A673 (cell line): ENCODE measurements at regions of chr15 and their contacts with region 1.

Region 1: GRCh38 chr15:63487076-63487757 is 17.2 kb upstream of the USP3 start:
- DNase-seq: peak; percentile 91
- H3K4me3 ChIP-seq: no peak overlapping the region
- H3K27ac ChIP-seq: no peak overlapping the region
- H3K4me1 ChIP-seq: peaks cover 18% of the 10 kb centered on the region
- H3K27me3 ChIP-seq: no peaks in the 10 kb centered on the region
- CTCF ChIP-seq: peak; percentile 98

Region 2: GRCh38 chr15:63499175-63499549 is 11.9 kb after region 1 on chr15:
- CTCF ChIA-PET with region 1: interaction called, 10 read pairs
- POLR2A ChIA-PET with region 1: interaction called, 3 read pairs
- intact Hi-C with region 1: no loop called
- DNase-seq: no peak
- H3K4me3 ChIP-seq: no peak overlapping the region
- H3K27ac ChIP-seq: no peak overlapping the region
- H3K4me1 ChIP-seq: peaks cover 21% of the 10 kb centered on the region
- H3K27me3 ChIP-seq: no peaks in the 10 kb centered on the region
- CTCF ChIP-seq: no peak

Region 3: DNA sequence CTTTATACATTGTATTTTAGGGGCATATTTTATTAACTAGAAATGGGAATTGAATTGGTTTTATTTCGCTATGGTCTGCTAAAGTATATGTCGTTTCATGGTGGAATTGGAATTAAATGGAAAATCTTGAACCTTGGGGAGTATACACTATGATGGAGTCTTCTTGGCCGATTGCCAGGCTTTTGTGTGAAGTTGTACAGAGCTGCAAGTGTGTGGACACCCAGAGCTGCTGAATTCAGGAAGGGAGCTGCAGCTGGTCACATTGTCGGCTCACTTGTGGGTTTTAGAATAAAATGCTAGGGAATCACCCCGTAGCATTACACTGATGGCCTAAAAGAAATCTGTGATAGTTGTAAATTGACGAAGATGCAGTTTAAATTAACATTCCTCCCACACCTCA is 52.3 kb after region 1 on chr15:
- CTCF ChIA-PET with region 1: no interaction called
- POLR2A ChIA-PET with region 1: no interaction called
- intact Hi-C with region 1: no loop called
- DNase-seq: peak; percentile 68
- H3K4me3 ChIP-seq: no peak overlapping the region
- H3K27ac ChIP-seq: peak overlapping the region; percentile 9
- H3K4me1 ChIP-seq: peaks cover 58% of the 10 kb centered on the region
- H3K27me3 ChIP-seq: no peaks in the 10 kb centered on the region
- CTCF ChIP-seq: no peak

Region 4: DNA sequence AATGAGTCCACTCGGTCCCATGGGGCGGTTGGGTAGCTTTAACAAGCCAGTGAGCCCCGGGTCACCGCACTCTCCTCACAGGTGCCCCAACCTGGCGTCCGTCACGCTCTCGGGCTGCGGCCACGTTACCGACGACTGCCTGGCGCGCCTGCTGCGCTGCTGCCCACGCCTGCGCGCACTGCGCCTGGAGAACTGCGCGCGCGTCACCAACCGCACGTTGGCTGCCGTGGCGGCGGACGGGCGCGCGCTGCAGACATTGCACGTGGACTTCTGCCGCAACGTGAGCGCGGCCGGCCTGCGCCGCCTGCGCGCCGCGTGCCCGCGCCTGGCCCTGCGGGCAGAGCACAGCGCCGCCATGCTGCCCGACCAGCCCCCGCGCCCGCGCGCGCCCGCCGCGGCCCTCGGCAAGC is 113.4 kb after region 1 on chr15:
- CTCF ChIA-PET with region 1: interaction called, 4 read pairs
- POLR2A ChIA-PET with region 1: no interaction called
- intact Hi-C with region 1: loop called (anchors 5 kb)
- DNase-seq: peak; percentile 96
- H3K4me3 ChIP-seq: peak overlapping the region; percentile 77
- H3K27ac ChIP-seq: peak overlapping the region; percentile 84
- H3K4me1 ChIP-seq: peaks cover 17% of the 10 kb centered on the region
- H3K27me3 ChIP-seq: no peaks in the 10 kb centered on the region
- CTCF ChIP-seq: no peak